ENCODE measurements at regions of chr14 and their contacts with region 1.

Region 1: DNA sequence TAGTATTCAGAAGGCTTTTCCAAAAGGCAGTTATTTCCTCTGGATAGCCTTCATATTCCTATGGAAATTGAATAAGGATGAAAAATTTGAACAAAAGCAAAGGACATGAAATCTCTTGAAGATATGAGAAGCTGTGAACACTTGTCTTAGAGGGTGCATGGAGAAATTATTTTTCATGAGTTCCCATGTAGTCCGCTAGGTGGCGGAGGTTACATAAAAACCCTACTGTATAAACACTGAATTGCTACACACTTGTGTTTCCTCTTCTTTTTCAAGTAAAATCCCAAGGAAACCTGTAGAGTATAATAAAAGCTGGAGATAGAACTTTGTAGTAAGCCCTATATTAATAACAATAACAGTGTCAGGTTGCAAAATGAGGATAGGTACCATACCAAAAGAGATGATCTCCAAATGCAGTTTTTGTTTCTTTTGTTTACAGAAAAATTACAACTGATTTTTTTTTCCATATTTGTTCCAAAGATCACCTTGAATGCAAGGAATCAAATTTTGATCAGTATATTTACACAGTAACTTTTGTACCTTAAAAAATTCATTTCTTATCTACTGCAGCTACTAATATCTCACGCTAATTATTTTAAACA is 37.8 kb upstream of the OR4E1 start:
- DNase-seq: peak in 5 of 9 experiments; percentile 16 to 68 (median 27)
- ATAC-seq: peak; percentile 47
- H3K4me3 ChIP-seq: no peak overlapping the region
- H3K4me3 Mint-ChIP-seq: peak overlapping the region; percentile 17
- H3K27ac ChIP-seq: peak overlapping the region in 1 of 2 experiments; percentile 49
- H3K27ac Mint-ChIP-seq: peak overlapping the region; percentile 66
- H3K4me1 ChIP-seq: no peaks in the 10 kb centered on the region
- H3K4me1 Mint-ChIP-seq: peaks cover 2% of the 10 kb centered on the region
- H3K27me3 ChIP-seq: no peaks in the 10 kb centered on the region
- H3K27me3 Mint-ChIP-seq: peaks cover 35% of the 10 kb centered on the region
- CTCF ChIP-seq: peak; percentile 88

Region 2: DNA sequence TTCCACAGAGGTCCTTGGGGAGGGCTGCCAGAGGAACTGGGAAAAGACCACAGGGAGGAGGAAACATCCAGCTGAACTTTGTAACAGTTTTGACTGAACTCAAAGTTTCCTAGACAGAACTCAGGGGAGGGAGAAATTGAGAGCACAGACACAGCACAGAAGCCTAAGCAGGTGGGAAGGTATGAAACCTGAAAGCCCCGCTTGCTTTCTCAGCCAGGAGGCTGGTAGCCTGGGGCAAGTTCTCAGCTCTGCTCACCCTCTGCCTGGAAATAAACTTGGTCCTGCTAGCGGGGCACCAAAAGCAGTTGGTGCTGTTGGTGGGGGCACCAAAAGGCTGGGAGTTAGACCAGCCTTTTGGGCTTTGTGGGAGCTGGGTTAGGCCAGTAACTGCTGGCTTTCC is 11.9 kb before region 1 on chr14:
- CTCF ChIA-PET with region 1: interaction called, 10 read pairs
- POLR2A ChIA-PET with region 1: no interaction called
- intact Hi-C with region 1: no loop called
- DNase-seq: no peak
- ATAC-seq: no peak
- H3K4me3 ChIP-seq: no peak overlapping the region
- H3K4me3 Mint-ChIP-seq: no peak overlapping the region
- H3K27ac ChIP-seq: no peak overlapping the region
- H3K27ac Mint-ChIP-seq: no peak overlapping the region
- H3K4me1 ChIP-seq: peaks cover 10% of the 10 kb centered on the region
- H3K4me1 Mint-ChIP-seq: peaks cover 10% of the 10 kb centered on the region
- H3K27me3 ChIP-seq: no peaks in the 10 kb centered on the region
- H3K27me3 Mint-ChIP-seq: peaks cover 10% of the 10 kb centered on the region
- CTCF ChIP-seq: no peak

Region 3: DNA sequence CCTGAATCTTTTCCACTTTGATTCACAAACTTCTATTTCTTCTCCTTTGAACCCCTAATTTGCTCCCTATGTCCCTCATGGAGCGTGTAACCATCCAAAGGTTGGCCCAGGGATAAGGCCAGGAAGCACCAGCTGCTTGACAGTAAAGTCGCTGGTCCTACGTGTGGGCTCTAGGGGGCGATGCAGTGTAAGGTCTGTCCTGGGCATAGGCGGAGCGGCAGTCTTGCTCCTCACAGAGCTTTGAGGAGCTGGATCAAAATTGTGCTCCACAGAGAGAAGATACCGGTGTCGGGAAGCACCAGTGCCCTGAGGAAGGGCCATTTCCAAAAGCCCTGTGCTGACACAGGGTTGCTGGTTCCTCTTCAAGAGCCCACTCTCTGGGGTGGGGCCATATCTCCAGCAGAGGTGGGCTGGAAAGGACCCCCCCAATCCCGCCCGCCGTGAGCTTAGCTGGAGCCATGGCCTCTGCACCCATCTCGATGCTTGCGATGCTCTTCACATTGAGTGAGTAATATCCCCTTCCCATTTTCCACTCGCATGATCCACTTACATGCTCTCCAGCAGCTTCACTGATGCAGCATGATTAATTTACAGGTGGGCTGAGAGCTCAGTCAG is 12.1 kb after region 1 on chr14:
- CTCF ChIA-PET with region 1: interaction called, 15 read pairs
- POLR2A ChIA-PET with region 1: interaction called, 6 read pairs
- intact Hi-C with region 1: no loop called
- DNase-seq: peak in 6 of 9 experiments; percentile 9 to 75 (median 50)
- ATAC-seq: peak; percentile 80
- H3K4me3 ChIP-seq: peak overlapping the region; percentile 24 to 42
- H3K4me3 Mint-ChIP-seq: peak overlapping the region; percentile 80
- H3K27ac ChIP-seq: peak overlapping the region in 1 of 2 experiments; percentile 8
- H3K27ac Mint-ChIP-seq: peak overlapping the region; percentile 76
- H3K4me1 ChIP-seq: no peaks in the 10 kb centered on the region
- H3K4me1 Mint-ChIP-seq: peaks cover 3% of the 10 kb centered on the region
- H3K27me3 ChIP-seq: peaks cover 0 to 2% of the 10 kb centered on the region in 2 experiments
- H3K27me3 Mint-ChIP-seq: peaks cover 37% of the 10 kb centered on the region
- CTCF ChIP-seq: peak; percentile 35

Region 4: GRCh38 chr14:22630486-22630885 is 919.0 kb after region 1 on chr14:
- CTCF ChIA-PET with region 1: no interaction called
- POLR2A ChIA-PET with region 1: no interaction called
- intact Hi-C with region 1: no loop called
- DNase-seq: no peak
- ATAC-seq: no peak
- H3K4me3 ChIP-seq: no peak overlapping the region
- H3K4me3 Mint-ChIP-seq: no peak overlapping the region
- H3K27ac ChIP-seq: no peak overlapping the region
- H3K27ac Mint-ChIP-seq: no peak overlapping the region
- H3K4me1 ChIP-seq: no peaks in the 10 kb centered on the region
- H3K4me1 Mint-ChIP-seq: no peaks in the 10 kb centered on the region
- H3K27me3 ChIP-seq: peaks cover 0 to 3% of the 10 kb centered on the region in 2 experiments
- H3K27me3 Mint-ChIP-seq: peaks cover 10% of the 10 kb centered on the region
- CTCF ChIP-seq: no peak